IMR-90 (cell line): ENCODE measurements at regions of chr20 and their contacts with region 1.

Region 1: GRCh38 chr20:60204601-60205000 is 246.4 kb downstream of the CDH26 start:
- DNase-seq: no peak
- ATAC-seq: no peak
- H3K4me3 ChIP-seq: no peak overlapping the region
- H3K27ac ChIP-seq: no peak overlapping the region
- H3K4me1 ChIP-seq: no peaks in the 10 kb centered on the region
- H3K27me3 ChIP-seq: no peaks in the 10 kb centered on the region
- CTCF ChIP-seq: no peak
- POLR2A ChIP-seq: no peak
- RAD21 ChIP-seq: no peak

Region 2: DNA sequence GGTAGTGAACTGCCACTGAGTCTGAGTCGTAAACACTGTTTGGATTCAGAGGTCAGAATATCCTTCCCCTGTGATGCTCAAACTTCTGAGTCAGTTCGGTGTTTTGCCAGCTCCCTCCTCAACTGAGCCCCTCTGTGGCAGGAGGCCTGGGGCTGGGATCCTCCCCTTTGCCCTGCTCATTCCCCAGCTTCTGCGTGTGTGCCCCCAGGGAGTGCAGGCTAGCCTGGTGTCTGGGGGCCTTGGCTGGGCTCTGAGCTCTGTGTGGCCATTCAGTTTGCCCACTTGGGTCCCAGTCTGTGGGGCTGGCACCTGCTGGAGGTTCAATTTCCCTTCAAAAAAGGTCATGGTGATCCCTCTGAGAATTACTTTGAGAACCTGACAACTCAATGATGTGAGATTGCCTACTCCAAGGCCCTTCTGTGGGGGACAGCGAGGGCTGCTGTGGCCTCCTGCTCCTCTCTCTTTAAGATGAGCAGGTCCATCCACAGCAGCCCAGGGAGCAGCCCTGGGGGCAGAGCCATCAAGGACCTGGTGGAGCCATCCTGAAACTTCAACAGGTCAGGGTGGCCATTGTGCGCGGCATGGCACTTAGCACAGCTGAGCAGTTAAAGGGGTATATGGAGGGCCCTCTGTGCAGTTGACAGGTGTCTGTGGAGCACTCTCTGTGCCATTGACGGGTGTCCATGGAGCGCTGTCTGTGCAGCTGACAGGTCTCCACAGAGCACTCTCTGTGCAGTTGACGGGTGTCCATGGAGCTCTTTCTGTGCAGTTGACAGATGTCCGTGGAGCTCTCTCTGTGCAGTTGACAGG is 418.4 kb before region 1 on chr20:
- CTCF ChIA-PET with region 1: no interaction called
- POLR2A ChIA-PET with region 1: no interaction called
- dilution Hi-C with region 1: no loop called
- in situ Hi-C with region 1: no loop called
- intact Hi-C with region 1: no loop called
- DNase-seq: no peak
- ATAC-seq: no peak
- H3K4me3 ChIP-seq: no peak overlapping the region
- H3K27ac ChIP-seq: no peak overlapping the region
- H3K4me1 ChIP-seq: no peaks in the 10 kb centered on the region
- H3K27me3 ChIP-seq: no peaks in the 10 kb centered on the region
- CTCF ChIP-seq: no peak
- POLR2A ChIP-seq: no peak
- RAD21 ChIP-seq: no peak

Region 3: DNA sequence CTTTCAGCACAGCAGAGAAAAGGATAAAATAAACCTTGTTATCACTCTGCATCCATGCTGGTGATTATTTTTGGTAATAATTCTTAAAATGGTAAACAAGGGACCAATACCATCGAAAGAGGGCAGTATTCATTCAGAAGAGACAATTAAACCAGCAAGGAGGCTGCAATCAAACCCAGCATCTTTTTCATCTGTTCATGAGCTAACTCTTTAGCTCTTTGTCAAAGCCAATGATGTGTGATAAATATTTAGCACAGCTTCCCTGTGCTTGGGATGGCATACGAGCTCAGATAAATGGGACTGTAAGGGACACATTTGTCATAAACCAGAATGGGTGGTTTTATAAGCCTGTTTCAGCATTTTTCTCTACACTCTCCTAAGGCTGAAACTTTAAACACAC is 212.0 kb before region 1 on chr20:
- CTCF ChIA-PET with region 1: no interaction called
- POLR2A ChIA-PET with region 1: no interaction called
- dilution Hi-C with region 1: no loop called
- in situ Hi-C with region 1: no loop called
- intact Hi-C with region 1: loop called (anchors 1 kb)
- DNase-seq: peak; percentile 18
- ATAC-seq: peak; percentile 44; the same call in 1 of the 2 replicates
- H3K4me3 ChIP-seq: no peak overlapping the region
- H3K27ac ChIP-seq: no peak overlapping the region
- H3K4me1 ChIP-seq: no peaks in the 10 kb centered on the region
- H3K27me3 ChIP-seq: peaks cover 11% of the 10 kb centered on the region; the same call in 1 of the 2 replicates
- CTCF ChIP-seq: peak; percentile 36
- POLR2A ChIP-seq: no peak
- RAD21 ChIP-seq: peak; percentile 43

Region 4: DNA sequence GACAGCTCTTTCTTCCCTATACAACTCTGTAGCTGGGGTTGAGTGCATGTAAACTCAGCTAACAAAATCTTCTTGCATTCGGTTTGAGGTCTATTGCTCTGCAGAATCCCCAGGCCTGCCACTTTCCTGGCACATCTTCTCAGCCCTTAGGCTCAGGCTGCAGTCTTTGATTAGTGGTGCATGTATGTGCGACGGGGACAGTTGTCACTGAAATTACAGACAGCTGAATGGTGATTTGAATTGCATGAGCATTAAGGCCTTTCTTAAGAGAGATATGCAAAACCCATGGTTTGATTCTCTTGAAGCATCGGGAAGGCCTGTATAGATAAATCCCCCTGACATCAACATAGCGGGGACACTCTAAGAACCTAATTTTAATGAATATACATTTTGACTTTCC is 23.6 kb before region 1 on chr20:
- CTCF ChIA-PET with region 1: no interaction called
- POLR2A ChIA-PET with region 1: no interaction called
- dilution Hi-C with region 1: no loop called
- in situ Hi-C with region 1: no loop called
- intact Hi-C with region 1: no loop called
- DNase-seq: no peak
- ATAC-seq: no peak
- H3K4me3 ChIP-seq: no peak overlapping the region
- H3K27ac ChIP-seq: no peak overlapping the region
- H3K4me1 ChIP-seq: no peaks in the 10 kb centered on the region
- H3K27me3 ChIP-seq: no peaks in the 10 kb centered on the region
- CTCF ChIP-seq: no peak
- POLR2A ChIP-seq: no peak
- RAD21 ChIP-seq: no peak